ENCODE measurements at regions of chr10 and their contacts with region 1.

Region 1: DNA sequence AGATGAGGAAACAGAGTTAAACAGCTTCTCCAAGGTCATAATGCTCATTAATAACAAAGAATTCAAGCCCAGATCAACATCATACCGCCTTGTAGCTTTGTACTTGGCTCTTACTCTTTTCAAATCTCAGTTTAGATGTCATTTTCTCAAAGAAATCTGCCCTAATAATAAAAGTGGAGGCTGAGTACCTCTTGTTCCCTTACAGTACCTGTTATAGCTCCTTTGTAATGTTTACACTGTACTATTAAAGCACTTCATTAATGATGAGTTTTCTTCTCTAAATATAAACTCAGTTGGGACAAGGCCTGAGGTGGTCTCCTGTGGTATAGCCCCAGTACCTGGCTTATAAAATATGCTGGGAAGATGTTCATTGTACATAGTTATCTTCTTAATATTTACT is 7.8 kb downstream of the SMNDC1 start:
- DNase-seq: no peak
- ATAC-seq: no peak
- H3K4me3 ChIP-seq: no peak overlapping the region
- H3K4me3 Mint-ChIP-seq: no peak overlapping the region
- H3K27ac ChIP-seq: no peak overlapping the region
- H3K27ac Mint-ChIP-seq: no peak overlapping the region
- H3K4me1 ChIP-seq: peaks cover 0 to 2% of the 10 kb centered on the region in 2 donors
- H3K4me1 Mint-ChIP-seq: peaks cover 15% of the 10 kb centered on the region
- H3K27me3 ChIP-seq: no peaks in the 10 kb centered on the region
- H3K27me3 Mint-ChIP-seq: no peaks in the 10 kb centered on the region
- CTCF ChIP-seq: no peak

Region 2: DNA sequence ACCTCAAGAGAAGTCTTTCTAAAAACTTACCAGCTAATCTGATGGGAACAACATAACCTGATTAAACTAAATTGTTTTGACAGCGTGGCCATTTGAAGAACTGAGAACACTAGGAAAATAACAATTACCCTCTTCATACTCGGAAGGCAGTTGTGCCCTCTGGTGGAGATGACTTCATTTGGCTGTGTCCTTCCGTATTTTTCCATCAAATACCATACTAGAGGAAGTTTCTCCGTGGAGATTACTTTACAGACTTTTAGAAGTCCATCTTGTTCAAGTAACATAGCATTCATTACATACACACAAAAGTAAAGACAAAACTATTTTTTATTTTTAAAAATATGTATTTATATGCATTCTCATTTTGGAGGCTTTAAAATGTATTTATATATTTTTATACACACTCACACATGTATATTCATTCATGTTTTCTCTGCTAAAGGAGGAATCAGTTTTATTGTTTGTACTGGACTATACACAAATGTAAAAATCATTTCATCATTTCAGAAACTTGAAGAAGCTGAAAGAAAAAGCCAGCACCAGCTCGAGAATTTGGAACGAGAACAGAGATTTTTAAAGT is 17.5 kb before region 1 on chr10:
- CTCF ChIA-PET with region 1: interaction called, 10 read pairs
- POLR2A ChIA-PET with region 1: no interaction called
- intact Hi-C with region 1: no loop called
- DNase-seq: peak; percentile 79
- ATAC-seq: peak; percentile 68
- H3K4me3 ChIP-seq: peak overlapping the region in 1 of 5 experiments; percentile 38
- H3K4me3 Mint-ChIP-seq: peak overlapping the region; percentile 26
- H3K27ac ChIP-seq: no peak overlapping the region
- H3K27ac Mint-ChIP-seq: no peak overlapping the region
- H3K4me1 ChIP-seq: peaks cover 11 to 17% of the 10 kb centered on the region in 2 donors
- H3K4me1 Mint-ChIP-seq: peaks cover 21% of the 10 kb centered on the region
- H3K27me3 ChIP-seq: no peaks in the 10 kb centered on the region
- H3K27me3 Mint-ChIP-seq: no peaks in the 10 kb centered on the region
- CTCF ChIP-seq: peak; percentile 84